Activated CD4-positive, alpha-beta T cell treated with anti-CD3 and anti-CD28 coated beads, Interleukin-2, amount 10 ng/mL, durations not matched to agents 24 days and 14 days (primary cell): ENCODE measurements at regions of chr17 and their contacts with region 1.

Region 1: GRCh38 chr17:7263083-7264078 is 1.1 kb upstream of the CLDN7 start:
- DNase-seq: peak; percentile 70
- H3K4me3 Mint-ChIP-seq: peak overlapping the region; percentile 79
- H3K27ac Mint-ChIP-seq: peak overlapping the region; percentile 63
- H3K4me1 Mint-ChIP-seq: peaks cover 22% of the 10 kb centered on the region
- H3K27me3 Mint-ChIP-seq: peaks cover 30% of the 10 kb centered on the region

Region 2: GRCh38 chr17:7280519-7281429 is 17.4 kb after region 1 on chr17:
- intact Hi-C with region 1: loop called (anchors 2 kb)
- DNase-seq: peak; percentile 93
- H3K4me3 Mint-ChIP-seq: peak overlapping the region; percentile 84
- H3K27ac Mint-ChIP-seq: peak overlapping the region; percentile 76
- H3K4me1 Mint-ChIP-seq: peaks cover 10% of the 10 kb centered on the region
- H3K27me3 Mint-ChIP-seq: peaks cover 32% of the 10 kb centered on the region